ENCODE measurements at regions of chr12 and their contacts with region 1.

Region 1: DNA sequence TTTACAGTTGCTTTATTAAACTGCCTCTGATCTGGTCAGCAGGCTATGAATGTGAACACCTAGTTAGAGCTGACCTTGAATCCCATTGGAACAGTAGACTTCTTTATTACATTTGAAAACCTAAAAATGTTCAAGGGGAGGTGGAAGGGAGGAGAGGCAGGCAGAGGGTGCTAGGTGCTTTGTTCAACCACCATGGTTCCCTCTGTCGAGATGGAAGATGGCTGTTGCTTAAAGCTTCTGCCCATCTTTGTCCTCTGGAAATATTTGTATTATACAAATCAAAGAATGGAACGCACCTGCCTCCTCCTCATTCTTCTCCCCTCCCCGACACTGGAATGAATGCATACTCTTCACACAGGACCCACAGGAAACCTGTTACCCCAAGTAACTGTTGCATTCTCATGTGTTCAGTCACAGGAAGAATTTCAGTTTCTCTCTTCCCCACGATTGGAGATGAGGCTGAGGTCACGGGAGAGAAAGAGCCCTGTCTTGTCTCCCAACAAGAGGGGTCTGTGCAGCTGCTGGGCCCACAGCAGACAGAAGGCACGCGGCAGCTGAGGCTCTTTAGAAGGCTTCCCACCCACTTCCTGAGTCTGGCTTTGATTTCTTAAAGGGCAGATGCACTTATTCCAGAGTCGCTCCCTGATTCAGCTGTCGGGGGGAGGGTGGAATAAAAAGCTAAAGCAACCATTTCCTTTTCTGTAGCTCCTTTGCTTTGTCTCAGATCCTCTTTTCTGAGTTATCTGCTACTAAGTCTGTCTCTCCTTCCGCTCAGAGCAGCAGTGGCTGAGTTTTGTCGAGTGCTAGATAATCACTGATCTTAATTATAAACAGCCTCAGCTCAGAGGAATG is 217.9 kb upstream of the BTG1 start:
- DNase-seq: peak; percentile 65
- H3K4me3 Mint-ChIP-seq: peak overlapping the region; percentile 61
- H3K27ac Mint-ChIP-seq: peak overlapping the region; percentile 81
- H3K4me1 Mint-ChIP-seq: peaks cover 62% of the 10 kb centered on the region
- H3K27me3 Mint-ChIP-seq: no peaks in the 10 kb centered on the region

Region 2: DNA sequence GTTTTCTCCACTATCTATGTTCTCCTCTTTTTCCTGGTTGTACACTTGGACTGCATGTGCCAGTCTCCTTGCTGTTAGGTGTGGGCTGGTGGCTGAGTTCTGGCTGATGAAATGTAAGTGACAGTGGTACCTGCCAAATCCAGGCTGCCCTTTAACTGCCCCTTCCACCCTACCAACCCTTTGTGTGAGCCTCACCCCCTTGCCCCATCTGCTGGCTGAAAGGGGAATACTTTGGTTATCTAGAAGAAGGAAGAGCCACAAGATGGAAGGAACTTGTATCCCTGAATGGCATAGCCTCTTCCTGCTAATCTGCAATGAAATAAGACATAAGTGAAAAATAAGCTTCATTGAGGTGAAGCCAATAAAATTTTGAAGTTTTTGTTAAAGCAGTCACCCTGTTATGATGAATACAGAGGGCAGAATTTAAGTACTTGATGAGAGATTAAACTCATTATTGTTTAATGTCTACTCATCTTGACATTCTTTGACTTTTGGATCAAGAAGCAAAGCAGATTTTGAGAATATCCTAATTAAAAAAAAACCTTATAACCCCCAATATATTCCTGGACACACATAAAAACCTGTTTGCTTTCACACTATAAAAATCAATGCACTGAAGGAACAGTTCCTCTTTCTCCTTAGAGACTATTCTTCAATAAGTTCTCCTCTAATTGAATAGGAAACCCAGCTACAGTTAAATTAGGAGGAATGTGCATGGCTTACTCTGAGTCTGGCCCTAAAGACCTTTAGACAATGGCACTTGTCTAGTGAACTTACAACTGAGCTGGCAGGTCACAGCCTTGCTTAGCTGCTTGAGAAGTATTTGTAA is 44.8 kb after region 1 on chr12:
- CTCF ChIA-PET with region 1: interaction called, 17 read pairs
- DNase-seq: peak; percentile 71
- H3K4me3 Mint-ChIP-seq: no peak overlapping the region
- H3K27ac Mint-ChIP-seq: peak overlapping the region; percentile 64
- H3K4me1 Mint-ChIP-seq: peaks cover 52% of the 10 kb centered on the region
- H3K27me3 Mint-ChIP-seq: no peaks in the 10 kb centered on the region

Measured in activated naive CD4-positive, alpha-beta T cell treated with anti-CD3 and anti-CD28 coated beads, Interleukin-2, amount 10 ng/mL, durations not matched to agents 7 days and 5 days (primary cell).